ENCODE measurements at regions of chr19 and their contacts with region 1.

Region 1: GRCh38 chr19:42028304-42029216 is 34.5 kb upstream of the ATP1A3 start:
- H3K4me3 ChIP-seq: no peak overlapping the region
- H3K27ac ChIP-seq: no peak overlapping the region
- H3K4me1 ChIP-seq: peaks cover 18% of the 10 kb centered on the region
- CTCF ChIP-seq: peak; percentile 94

Region 2: DNA sequence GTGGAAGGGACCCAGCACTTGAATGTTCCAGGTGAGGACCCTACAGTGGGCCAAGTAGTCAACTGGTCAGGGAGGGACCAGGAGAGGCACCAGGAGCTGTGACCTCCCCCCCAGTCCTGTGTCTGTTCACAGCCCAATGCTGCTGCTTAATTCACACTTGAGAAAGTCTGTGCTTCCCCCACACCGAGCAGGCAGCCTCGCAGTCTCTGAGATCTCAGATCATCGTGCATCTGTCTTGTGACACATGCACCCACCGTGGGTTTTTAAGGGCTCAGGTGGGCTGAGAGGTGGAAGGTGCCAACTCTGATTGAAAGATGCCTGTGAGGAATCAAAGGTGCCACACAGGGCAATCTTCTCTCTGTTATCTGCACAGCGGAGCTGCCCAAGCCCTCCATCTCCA is 314.0 kb before region 1 on chr19:
- CTCF ChIA-PET with region 1: no interaction called
- POLR2A ChIA-PET with region 1: no interaction called
- H3K4me3 ChIP-seq: no peak overlapping the region
- H3K27ac ChIP-seq: no peak overlapping the region
- H3K4me1 ChIP-seq: no peaks in the 10 kb centered on the region
- CTCF ChIP-seq: no peak

Region 3: DNA sequence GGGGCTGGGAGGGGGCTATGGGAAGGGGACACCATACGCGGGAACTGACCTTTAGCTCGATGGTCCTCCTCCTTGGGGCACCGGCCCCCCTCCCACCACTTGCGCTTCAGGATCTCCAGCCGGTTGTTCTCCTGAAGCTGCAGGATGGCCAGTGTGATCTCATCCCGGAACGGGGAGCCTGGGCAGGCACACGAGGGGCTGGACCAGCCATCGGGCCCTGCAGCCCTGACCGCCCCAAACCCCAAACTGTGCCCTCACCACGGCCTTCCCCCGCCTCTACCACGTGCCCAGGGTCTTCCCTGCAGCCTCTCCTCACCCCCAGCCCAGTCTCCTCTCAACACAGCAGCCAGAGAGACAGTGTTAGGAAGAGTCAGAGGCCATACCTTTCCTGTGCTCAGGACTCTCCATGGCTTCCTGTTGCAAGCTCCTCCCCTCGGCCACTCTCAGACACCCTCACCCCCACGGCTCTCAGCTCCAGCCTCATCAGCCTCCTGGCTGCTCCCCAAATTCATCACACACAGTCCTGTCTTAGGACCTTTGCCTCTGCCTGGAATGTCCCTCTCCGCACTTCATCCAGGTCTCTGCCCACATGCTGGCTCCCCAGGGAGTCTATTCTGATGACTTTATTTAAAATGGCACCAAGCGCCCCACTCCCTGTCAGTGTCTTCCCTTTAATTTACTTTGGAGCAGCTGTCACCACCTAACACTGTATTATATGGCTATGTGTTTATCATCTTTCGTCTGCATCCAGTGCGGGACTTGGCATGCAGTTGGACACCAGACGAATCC is 24.9 kb before region 1 on chr19:
- CTCF ChIA-PET with region 1: interaction called, 28 read pairs
- POLR2A ChIA-PET with region 1: no interaction called
- H3K4me3 ChIP-seq: no peak overlapping the region
- H3K27ac ChIP-seq: no peak overlapping the region
- H3K4me1 ChIP-seq: no peaks in the 10 kb centered on the region
- CTCF ChIP-seq: no peak

Region 4: GRCh38 chr19:42017040-42017439 is 11.5 kb before region 1 on chr19:
- CTCF ChIA-PET with region 1: interaction called, 78 read pairs
- POLR2A ChIA-PET with region 1: no interaction called
- H3K4me3 ChIP-seq: no peak overlapping the region
- H3K27ac ChIP-seq: no peak overlapping the region
- H3K4me1 ChIP-seq: no peaks in the 10 kb centered on the region
- CTCF ChIP-seq: no peak

Region 5: DNA sequence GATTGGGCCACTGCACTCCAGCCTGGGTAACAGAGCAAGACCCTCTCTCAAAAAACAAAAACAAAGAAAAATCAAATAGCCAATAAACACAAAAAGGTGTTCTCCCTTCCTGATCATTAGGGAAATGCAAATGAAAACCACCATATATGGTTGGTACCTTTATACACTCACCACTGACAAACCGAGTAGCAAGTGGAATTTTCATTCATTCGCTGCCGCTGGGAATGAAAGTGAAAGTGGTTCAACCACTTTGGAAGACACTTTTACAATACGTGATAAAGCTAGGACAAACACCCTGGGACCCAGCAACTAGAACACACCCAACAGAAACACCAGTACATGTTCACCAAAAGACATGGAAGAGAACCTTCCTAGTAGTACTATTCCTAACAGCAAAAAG is 20.4 kb after region 1 on chr19:
- CTCF ChIA-PET with region 1: interaction called, 57 read pairs
- POLR2A ChIA-PET with region 1: no interaction called
- H3K4me3 ChIP-seq: no peak overlapping the region
- H3K27ac ChIP-seq: no peak overlapping the region
- H3K4me1 ChIP-seq: peaks cover 5% of the 10 kb centered on the region; the same call in 1 of the 2 replicates
- CTCF ChIP-seq: no peak

Region 6: GRCh38 chr19:42335971-42336370 is 307.4 kb after region 1 on chr19:
- CTCF ChIA-PET with region 1: no interaction called
- POLR2A ChIA-PET with region 1: no interaction called
- H3K4me3 ChIP-seq: no peak overlapping the region
- H3K27ac ChIP-seq: no peak overlapping the region
- H3K4me1 ChIP-seq: no peaks in the 10 kb centered on the region
- CTCF ChIP-seq: no peak

Measured in HEK293 (cell line).